Heart left ventricle (tissue), 16 donors: ENCODE measurements at regions of chr2 and their contacts with region 1.

Region 1: DNA sequence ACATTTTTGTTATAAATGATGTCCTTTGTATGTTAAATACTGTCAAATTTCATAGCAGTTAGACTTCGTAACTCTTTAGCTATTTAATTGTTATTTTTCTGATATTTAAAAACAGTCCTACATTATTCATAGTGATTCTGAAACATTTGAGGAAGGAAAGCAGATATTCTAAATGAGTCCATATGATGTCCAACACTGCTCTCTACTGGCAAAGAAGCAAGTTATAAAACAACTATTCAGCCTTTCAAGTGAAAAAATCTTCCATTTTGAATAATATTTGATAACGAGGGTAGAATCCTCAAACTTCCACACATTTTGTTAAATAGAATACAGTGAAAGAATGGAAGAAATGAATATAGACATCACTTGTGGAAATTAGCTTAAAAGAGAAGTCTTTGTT is 220.8 kb downstream of the GULP1 start:
- DNase-seq: no peak
- ATAC-seq: peak in 2 of 4 donors; percentile 32 to 57
- H3K4me3 ChIP-seq: no peak overlapping the region
- H3K27ac ChIP-seq: no peak overlapping the region
- H3K4me1 ChIP-seq: peaks cover 0 to 6% (median 0%) of the 10 kb centered on the region in 12 donors
- H3K27me3 ChIP-seq: no peaks in the 10 kb centered on the region
- CTCF ChIP-seq: peak; percentile 11 to 70 (median 52)
- POLR2A ChIP-seq: no peak

Region 2: GRCh38 chr2:187499941-187500532 is 1012.4 kb before region 1 on chr2:
- intact Hi-C with region 1: loop called in 7 of 10 experiments (anchors 5 to 10 kb)
- DNase-seq: peak in 3 of 5 donors; percentile 30 to 41 (median 39)
- ATAC-seq: peak in 3 of 4 donors; percentile 39 to 77 (median 62)
- H3K4me3 ChIP-seq: no peak overlapping the region
- H3K27ac ChIP-seq: no peak overlapping the region
- H3K4me1 ChIP-seq: peaks cover 0 to 35% (median 0%) of the 10 kb centered on the region in 12 donors
- H3K27me3 ChIP-seq: no peaks in the 10 kb centered on the region
- CTCF ChIP-seq: peak; percentile 70 to 96 (median 84)
- POLR2A ChIP-seq: no peak

Region 3: DNA sequence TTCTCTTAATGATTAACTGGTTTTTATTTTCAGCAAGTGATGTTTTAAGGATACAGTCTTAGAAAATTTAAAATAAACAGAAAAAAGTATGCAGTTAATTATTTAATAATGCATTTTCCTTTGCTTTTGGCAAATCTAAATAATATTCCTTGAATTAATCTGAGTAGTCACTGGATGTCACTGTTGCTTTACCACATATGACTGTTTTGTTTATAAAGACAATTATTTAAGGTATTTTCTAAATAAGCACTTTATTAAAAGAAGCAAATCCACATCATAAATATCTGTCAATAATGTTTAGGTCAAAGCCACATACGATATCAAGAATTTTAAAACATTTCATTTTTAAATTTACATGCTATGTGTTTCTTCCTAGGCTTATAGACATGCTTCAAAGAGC is 917.7 kb before region 1 on chr2:
- intact Hi-C with region 1: loop called in 3 of 10 experiments (anchors 10 kb)
- DNase-seq: no peak
- ATAC-seq: no peak
- H3K4me3 ChIP-seq: no peak overlapping the region
- H3K27ac ChIP-seq: no peak overlapping the region
- H3K4me1 ChIP-seq: no peaks in the 10 kb centered on the region
- H3K27me3 ChIP-seq: no peaks in the 10 kb centered on the region
- CTCF ChIP-seq: peak in 4 of 12 donors; percentile 14 to 33 (median 26)
- POLR2A ChIP-seq: no peak

Region 4: GRCh38 chr2:188580727-188581126 is 68.3 kb after region 1 on chr2:
- intact Hi-C with region 1: no loop called
- DNase-seq: no peak
- ATAC-seq: no peak
- H3K4me3 ChIP-seq: no peak overlapping the region
- H3K27ac ChIP-seq: no peak overlapping the region
- H3K4me1 ChIP-seq: peaks cover 0 to 4% (median 0%) of the 10 kb centered on the region in 12 donors
- H3K27me3 ChIP-seq: no peaks in the 10 kb centered on the region
- CTCF ChIP-seq: no peak
- POLR2A ChIP-seq: no peak